ENCODE measurements at regions of chr16 and their contacts with region 1.

Region 1: DNA sequence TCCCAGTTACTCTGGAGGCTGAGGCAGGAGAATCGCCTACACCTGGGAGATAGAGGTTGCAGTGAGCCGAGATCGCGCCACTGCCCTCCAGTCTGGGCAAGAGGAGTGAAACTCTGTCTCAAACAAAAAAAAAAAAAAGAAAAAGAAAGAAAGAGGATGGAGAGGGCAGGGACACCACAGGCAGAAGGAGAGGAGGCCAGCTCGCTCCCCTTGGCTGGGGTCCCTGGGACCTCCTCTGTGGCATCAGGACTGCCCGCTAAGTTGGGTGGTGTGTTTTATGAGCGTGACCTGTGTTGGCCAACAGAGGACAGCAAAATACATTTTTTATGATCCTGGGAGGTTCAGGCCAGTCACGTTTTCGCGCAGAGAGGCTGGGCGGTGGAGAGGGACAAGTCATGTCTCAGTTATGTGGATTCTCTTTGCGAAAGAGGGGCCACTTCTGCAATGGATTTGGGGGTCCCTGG is 229.6 kb downstream of the MRTFB start:
- DNase-seq: peak in 1 of 2 donors; percentile 90
- H3K4me3 ChIP-seq: peak overlapping the region; percentile 97 to 98
- H3K27ac ChIP-seq: peak overlapping the region; percentile 81 to 83
- H3K4me1 ChIP-seq: peaks cover 0 to 9% of the 10 kb centered on the region in 2 donors
- H3K27me3 ChIP-seq: no peaks in the 10 kb centered on the region
- CTCF ChIP-seq: peak; percentile 66 to 72 (median 69)

Region 2: DNA sequence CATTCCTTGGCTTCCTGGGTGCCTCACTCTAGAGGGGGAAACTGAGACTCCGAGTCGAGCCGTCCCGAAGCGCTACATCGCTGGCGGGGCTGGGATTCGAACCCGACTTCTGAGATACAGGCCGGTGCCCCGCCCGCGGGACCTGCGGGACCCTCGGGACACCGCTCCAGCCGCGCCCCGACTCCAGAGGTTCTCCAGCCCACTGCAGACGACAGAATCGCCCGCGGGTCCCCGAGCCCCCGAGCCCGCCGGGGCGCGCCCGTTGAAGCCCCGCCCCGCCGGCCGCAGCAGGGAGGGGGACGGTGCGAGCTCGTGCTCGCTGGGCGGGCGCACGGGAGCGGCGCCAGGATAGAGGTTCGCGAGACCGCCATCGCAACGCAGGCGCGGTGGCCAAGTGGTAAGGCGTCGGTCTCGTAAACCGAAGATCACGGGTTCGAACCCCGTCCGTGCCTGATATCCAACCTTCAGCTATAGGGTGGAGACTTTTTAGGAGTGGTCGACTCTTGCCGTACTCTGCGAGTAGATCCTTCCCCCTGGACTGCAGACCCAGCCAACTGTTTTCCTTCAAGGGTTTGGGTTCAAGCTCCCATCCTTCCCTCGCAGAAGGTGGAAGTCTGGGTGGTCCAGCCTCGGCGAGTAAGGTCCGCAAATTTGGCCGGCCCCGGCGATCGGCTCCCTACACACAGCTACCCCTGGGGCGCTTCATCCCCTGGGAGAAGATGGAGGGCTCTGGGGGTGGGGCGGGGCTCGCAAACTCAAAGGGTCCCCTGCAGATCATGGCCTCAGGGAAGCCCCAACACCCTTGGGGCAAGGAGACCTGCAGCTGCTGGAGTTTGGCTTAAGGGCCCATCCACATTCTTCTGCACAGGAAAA is 15.0 kb before region 1 on chr16:
- intact Hi-C with region 1: loop called (anchors 1 kb)
- DNase-seq: peak; percentile 62 to 95
- H3K4me3 ChIP-seq: peak overlapping the region; percentile 80 to 88
- H3K27ac ChIP-seq: peak overlapping the region; percentile 65 to 95
- H3K4me1 ChIP-seq: peaks cover 3 to 6% of the 10 kb centered on the region in 2 donors
- H3K27me3 ChIP-seq: no peaks in the 10 kb centered on the region
- CTCF ChIP-seq: no peak

Region 3: GRCh38 chr16:14347706-14348105 is 47.0 kb after region 1 on chr16:
- intact Hi-C with region 1: no loop called
- DNase-seq: no peak
- H3K4me3 ChIP-seq: no peak overlapping the region
- H3K27ac ChIP-seq: no peak overlapping the region
- H3K4me1 ChIP-seq: no peaks in the 10 kb centered on the region
- H3K27me3 ChIP-seq: no peaks in the 10 kb centered on the region
- CTCF ChIP-seq: no peak

Region 4: GRCh38 chr16:14399378-14400284 is 98.9 kb after region 1 on chr16:
- intact Hi-C with region 1: loop called (anchors 5 kb)
- DNase-seq: peak; percentile 29 to 90
- H3K4me3 ChIP-seq: peak overlapping the region in 1 of 2 donors; percentile 28
- H3K27ac ChIP-seq: peak overlapping the region; percentile 59 to 87
- H3K4me1 ChIP-seq: peaks cover 9 to 19% of the 10 kb centered on the region in 2 donors
- H3K27me3 ChIP-seq: no peaks in the 10 kb centered on the region
- CTCF ChIP-seq: peak in 1 of 3 experiments; percentile 9

Region 5: DNA sequence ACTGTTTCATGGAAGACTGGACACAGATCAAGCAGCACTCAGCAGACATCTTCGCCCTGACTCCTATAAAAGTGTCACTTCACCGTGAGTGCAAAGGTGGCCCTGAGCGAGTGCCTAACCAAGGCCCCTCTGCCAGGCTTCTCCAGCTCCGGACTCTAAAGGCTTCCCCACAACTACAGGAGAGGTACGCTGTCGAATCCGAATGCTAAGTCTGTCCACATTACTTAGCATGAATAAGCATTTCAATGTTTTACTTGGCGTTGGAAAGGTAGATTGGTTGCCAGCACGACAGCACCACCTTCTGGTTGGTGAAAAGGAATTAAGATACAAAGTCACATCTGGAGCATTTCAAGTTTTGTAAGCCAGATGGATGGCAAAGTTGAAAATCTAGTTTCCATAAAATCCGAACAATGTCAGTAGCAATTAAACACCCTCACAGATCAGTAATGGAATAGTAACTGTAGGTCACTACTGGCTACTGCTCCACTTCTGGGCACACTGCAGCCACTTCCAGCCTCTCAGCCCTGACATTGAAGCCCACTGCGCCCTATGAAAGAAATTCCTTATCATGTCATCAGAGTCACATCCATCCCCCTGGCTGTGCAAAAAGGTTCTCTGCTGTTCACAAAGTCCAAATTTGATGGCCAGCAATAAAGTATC is 228.4 kb after region 1 on chr16:
- intact Hi-C with region 1: loop called (anchors 1 kb)
- DNase-seq: peak; percentile 16 to 85
- H3K4me3 ChIP-seq: peak overlapping the region in 1 of 2 donors; percentile 52
- H3K27ac ChIP-seq: peak overlapping the region in 1 of 2 donors; percentile 62
- H3K4me1 ChIP-seq: peaks cover 9 to 24% of the 10 kb centered on the region in 2 donors
- H3K27me3 ChIP-seq: no peaks in the 10 kb centered on the region
- CTCF ChIP-seq: peak; percentile 62 to 83 (median 74)

Measured in ascending aorta (tissue), 2 donors.